ENCODE measurements at regions of chr5 and their contacts with region 1.

Region 1: GRCh38 chr5:128201065-128201926 is 117.7 kb downstream of the SLC12A2 start:
- DNase-seq: peak; percentile 56 to 94 (median 82)
- ATAC-seq: peak; percentile 92
- H3K4me3 ChIP-seq: peak overlapping the region in 1 of 2 donors; percentile 3
- H3K27ac ChIP-seq: no peak overlapping the region
- H3K4me1 ChIP-seq: peaks cover 0 to 14% of the 10 kb centered on the region in 2 donors
- H3K27me3 ChIP-seq: no peaks in the 10 kb centered on the region
- CTCF ChIP-seq: peak; percentile 82 to 88

Region 2: DNA sequence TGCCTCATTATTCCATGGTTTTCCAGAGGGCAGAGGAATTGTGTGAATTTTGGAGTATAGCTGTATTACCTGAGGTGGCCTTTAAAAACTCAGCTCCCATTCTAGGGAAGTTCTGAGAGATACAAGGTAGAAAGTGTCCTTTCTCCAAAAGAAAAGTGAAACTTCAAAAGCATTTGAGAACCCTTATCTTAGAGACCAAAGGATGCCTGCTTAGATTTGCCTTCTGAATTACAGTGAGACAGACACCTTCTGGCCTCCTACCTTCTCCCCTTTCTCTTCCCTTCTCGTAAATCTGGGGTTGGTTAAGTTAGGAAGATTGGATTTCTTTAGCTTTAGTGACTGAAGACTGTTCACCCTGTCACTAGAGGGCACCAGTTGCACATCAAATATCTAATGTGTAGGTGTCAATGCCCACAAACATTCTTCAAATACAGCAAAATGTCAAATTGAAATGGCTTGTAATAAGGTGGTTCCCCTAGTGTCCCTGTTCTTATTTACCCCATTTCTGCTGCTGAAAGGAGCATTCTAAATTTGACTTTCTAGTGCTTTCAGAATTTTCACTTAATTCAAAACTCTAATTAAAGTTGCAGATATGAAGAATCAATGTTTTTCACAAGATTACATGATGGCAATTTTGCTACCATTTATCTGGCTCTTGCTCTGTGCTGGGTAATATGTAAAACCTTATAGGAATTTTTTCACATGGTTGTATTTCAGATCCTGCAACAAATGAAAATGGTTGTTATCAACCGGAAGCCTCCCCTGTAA is 637.1 kb before region 1 on chr5:
- intact Hi-C with region 1: loop called in 1 of 2 experiments (anchors 10 kb)
- DNase-seq: peak in 2 of 4 donors; percentile 50 to 72
- ATAC-seq: peak; percentile 88
- H3K4me3 ChIP-seq: no peak overlapping the region
- H3K27ac ChIP-seq: no peak overlapping the region
- H3K4me1 ChIP-seq: peaks cover 0 to 20% of the 10 kb centered on the region in 2 donors
- H3K27me3 ChIP-seq: peaks cover 0 to 2% of the 10 kb centered on the region in 2 donors
- CTCF ChIP-seq: peak; percentile 54 to 58

Region 3: GRCh38 chr5:127875235-127876021 is 325.9 kb before region 1 on chr5:
- intact Hi-C with region 1: loop called in 1 of 2 experiments (anchors 10 kb)
- DNase-seq: peak in 3 of 4 donors; percentile 36 to 70 (median 56)
- ATAC-seq: peak; percentile 78
- H3K4me3 ChIP-seq: no peak overlapping the region
- H3K27ac ChIP-seq: no peak overlapping the region
- H3K4me1 ChIP-seq: peaks cover 14 to 19% of the 10 kb centered on the region in 2 donors
- H3K27me3 ChIP-seq: no peaks in the 10 kb centered on the region
- CTCF ChIP-seq: no peak

Region 4: DNA sequence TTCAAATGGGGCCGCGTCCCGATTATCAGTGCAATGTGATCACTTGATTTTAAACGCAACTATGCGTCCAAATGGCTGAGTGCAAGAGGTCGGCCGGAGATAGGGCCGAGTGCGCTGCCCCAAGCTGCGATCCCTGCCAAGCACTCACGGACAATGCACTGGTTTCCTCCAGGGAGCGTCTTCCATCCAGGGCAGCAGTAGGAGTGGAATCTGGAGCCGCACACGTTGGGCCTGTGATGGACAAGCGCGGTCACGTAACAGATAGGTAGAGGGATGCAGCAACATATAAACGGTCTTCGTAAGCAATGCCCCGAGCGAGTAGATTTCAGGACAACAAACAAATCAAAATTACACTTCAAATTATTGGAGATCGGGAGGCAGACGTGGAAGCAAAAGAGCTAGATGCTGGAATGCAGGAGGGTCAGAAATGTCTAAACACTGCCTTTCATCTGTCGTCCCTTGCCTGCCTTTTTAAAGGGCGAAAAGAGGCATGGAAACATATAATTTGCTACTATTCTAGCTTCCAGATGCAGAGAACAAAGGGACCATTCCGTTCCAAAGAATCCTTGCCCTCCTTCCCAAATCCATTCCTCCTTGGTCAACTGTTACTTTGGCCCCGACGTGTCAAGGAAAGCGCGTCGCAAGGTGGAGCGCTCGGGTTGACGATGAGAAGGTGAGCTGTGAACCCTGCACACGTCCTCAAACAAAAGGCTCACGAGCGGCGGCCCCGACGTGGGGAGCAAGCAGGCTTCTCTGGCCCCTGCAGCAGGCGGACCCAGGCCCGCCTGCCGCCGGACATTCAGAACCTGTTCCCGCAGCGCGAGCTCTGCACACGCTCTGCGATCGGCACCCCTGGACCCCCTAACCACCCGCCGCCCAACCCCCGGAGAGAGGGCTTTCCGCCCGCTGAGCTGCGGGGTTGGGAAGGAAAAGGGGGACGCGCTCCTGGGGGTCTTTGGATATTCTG is 335.2 kb after region 1 on chr5:
- intact Hi-C with region 1: no loop called
- DNase-seq: peak in 3 of 4 donors; percentile 26 to 75 (median 44)
- ATAC-seq: no peak
- H3K4me3 ChIP-seq: peak overlapping the region in 1 of 2 donors; percentile 56
- H3K27ac ChIP-seq: no peak overlapping the region
- H3K4me1 ChIP-seq: peaks cover 12 to 25% of the 10 kb centered on the region in 2 donors
- H3K27me3 ChIP-seq: peaks cover 38 to 56% of the 10 kb centered on the region in 2 donors
- CTCF ChIP-seq: no peak